ENCODE measurements at regions of chr3 and their contacts with region 1.

Region 1: DNA sequence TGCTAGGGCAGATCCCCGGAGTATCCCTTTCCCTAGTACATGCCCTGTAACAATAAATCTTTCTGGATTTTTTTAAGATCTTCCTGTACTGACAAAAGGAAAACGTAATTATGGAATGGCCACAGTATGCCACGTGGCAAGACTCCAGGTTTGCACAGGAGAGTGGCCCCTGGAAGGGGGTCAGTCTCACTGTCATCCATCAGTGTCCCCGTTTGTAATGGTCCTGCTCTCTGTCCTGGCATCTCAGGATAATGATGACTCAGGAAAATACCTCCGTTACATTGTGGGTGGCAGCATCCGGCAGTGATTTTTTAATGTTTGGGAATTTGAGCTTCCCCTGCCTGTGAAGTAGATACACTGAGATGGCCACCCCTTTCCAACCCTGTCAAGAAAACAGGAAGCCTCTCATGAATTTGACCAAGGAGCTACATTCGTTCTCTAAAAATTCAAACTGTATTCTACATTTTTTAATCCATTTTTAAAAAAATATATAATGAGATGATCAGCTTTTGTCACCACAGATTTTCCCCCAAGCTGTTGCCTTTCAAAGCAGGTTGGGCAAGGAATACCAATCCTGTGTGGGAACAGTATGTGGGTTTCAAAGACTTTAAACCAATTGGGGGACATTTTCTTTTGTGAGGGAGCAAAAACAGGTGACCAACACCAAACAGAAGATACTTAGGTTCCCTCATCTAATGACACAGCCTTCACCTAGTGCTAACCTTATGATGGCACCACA is 110.4 kb downstream of the C3orf70 start:
- DNase-seq: no peak
- H3K4me3 ChIP-seq: no peak overlapping the region
- H3K27ac ChIP-seq: no peak overlapping the region
- H3K4me1 ChIP-seq: no peaks in the 10 kb centered on the region
- H3K27me3 ChIP-seq: no peaks in the 10 kb centered on the region
- CTCF ChIP-seq: no peak

Region 2: GRCh38 chr3:184986366-184986889 is 56.1 kb before region 1 on chr3:
- CTCF ChIA-PET with region 1: no interaction called
- dilution Hi-C with region 1: no loop called
- in situ Hi-C with region 1: no loop called
- intact Hi-C with region 1: no loop called
- DNase-seq: no peak
- H3K4me3 ChIP-seq: no peak overlapping the region
- H3K27ac ChIP-seq: no peak overlapping the region
- H3K4me1 ChIP-seq: no peaks in the 10 kb centered on the region
- H3K27me3 ChIP-seq: no peaks in the 10 kb centered on the region
- CTCF ChIP-seq: no peak

Region 3: DNA sequence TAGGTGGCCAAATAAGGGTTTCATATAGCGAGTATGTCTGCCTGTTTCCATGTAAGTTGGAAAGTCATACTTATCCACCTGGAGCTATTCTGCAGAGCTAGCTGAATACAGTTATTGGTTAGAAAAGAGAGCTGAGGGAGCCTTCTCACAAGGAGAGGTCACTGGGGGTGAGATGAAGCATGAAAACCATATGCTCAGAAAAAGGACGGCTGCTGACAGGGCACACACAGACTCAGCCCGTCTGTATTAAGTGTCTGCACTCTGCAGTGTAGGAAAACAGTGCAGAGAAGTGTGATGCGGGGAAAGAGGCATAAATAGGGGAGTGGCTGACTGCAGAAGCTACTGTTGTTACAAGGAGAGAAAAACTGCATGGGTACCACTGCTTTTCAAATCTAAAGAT is 52.2 kb after region 1 on chr3:
- CTCF ChIA-PET with region 1: no interaction called
- dilution Hi-C with region 1: loop called (anchors 5 kb)
- in situ Hi-C with region 1: no loop called
- intact Hi-C with region 1: no loop called
- DNase-seq: no peak
- H3K4me3 ChIP-seq: no peak overlapping the region
- H3K27ac ChIP-seq: no peak overlapping the region
- H3K4me1 ChIP-seq: no peaks in the 10 kb centered on the region
- H3K27me3 ChIP-seq: peaks cover 5% of the 10 kb centered on the region
- CTCF ChIP-seq: no peak

Region 4: DNA sequence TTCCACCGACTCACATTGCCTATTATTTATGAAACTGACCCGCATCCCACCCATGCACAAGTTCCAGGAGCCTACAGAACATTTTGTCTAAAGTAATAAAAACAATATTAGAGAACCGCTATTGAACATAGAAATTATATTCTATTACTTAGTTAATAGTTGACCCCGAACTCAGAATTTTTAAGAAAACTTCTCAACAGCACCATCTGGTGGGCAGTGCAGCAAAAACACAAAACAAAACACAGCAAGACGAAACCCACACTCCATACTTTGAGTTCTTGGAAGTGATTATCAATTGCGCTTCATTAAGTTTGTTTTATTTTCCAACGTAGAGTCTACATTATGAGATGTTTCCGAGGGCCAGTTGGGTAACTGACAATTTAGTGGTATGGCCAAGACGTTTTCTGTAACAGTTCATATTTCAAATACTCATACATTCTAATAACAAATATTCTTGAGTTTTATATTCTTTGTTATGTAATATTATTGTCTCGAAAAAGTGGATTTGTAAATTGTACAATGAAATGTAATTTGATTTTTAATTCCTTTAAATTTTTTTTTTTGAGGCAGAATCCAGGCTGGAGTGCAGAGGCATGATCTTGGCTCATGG is 134.4 kb after region 1 on chr3:
- CTCF ChIA-PET with region 1: interaction called, 16 read pairs
- dilution Hi-C with region 1: no loop called
- in situ Hi-C with region 1: no loop called
- intact Hi-C with region 1: no loop called
- DNase-seq: no peak
- H3K4me3 ChIP-seq: no peak overlapping the region
- H3K27ac ChIP-seq: no peak overlapping the region
- H3K4me1 ChIP-seq: no peaks in the 10 kb centered on the region
- H3K27me3 ChIP-seq: no peaks in the 10 kb centered on the region
- CTCF ChIP-seq: peak; percentile 56 to 63